ENCODE measurements at regions of chr4 and their contacts with region 1.

Region 1: GRCh38 chr4:102500696-102501446 is at the start of gene NFKB1:
- DNase-seq: peak; percentile 71 to 85 (median 78)
- H3K4me3 ChIP-seq: peak within 1 kb of the TSS; percentile 68 to 95 (median 78)
- H3K27ac ChIP-seq: peak within 1 kb of the TSS; percentile 92 to 99 (median 97)
- H3K4me1 ChIP-seq: peaks cover 23 to 44% of the 10 kb centered on the region in 2 donors
- H3K27me3 ChIP-seq: no peaks in the 10 kb centered on the region
- CTCF ChIP-seq: no peak
- POLR2A ChIP-seq: peak in 1 of 2 donors; percentile 63
- total RNA-seq, gene NFKB1: 13.6 to 49.1 (median 34.7) TPM

Region 2: DNA sequence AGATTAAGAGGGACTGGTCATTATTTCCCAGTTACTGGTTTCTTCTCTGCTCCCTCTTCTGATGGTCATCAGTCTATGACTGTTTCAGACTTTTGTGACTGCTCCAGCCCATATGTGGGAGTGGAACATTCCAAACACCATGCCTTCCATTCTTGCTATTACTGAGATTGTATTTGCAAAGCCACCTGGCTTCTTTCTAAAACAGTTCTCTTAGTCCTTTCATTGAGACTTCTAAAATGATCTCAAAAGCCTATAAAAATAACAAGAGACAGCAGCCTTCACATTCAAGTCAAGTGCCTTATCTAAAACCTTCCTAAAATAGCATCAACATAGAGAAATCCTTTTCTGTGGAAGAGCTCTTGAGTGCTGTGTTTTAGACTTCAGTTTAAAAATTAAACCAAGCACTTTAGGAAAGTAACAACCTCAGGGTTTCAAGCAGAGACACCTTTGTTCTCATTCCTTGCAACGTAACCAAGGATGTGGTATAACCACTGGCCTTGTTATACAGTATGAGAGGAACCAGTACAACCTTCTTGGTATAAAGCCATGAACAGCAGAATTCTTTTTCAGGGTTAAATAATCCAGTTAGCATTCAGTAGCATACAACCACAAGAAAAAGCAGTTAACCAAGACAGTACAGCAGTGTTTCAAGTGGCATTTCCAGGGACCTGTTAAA is 97.4 kb after region 1 on chr4:
- intact Hi-C with region 1: loop called in 1 of 2 experiments (anchors 10 kb)
- DNase-seq: no peak
- H3K4me3 ChIP-seq: no peak overlapping the region
- H3K27ac ChIP-seq: no peak overlapping the region
- H3K4me1 ChIP-seq: peaks cover 0 to 5% of the 10 kb centered on the region in 2 donors
- H3K27me3 ChIP-seq: no peaks in the 10 kb centered on the region
- CTCF ChIP-seq: no peak
- POLR2A ChIP-seq: no peak

Region 3: GRCh38 chr4:102610007-102610406 is 109.1 kb after region 1 on chr4:
- intact Hi-C with region 1: loop called in 1 of 2 experiments (anchors 10 kb)
- DNase-seq: no peak
- H3K4me3 ChIP-seq: no peak overlapping the region
- H3K27ac ChIP-seq: no peak overlapping the region
- H3K4me1 ChIP-seq: no peaks in the 10 kb centered on the region
- H3K27me3 ChIP-seq: no peaks in the 10 kb centered on the region
- CTCF ChIP-seq: peak in 1 of 6 experiments; percentile 27
- POLR2A ChIP-seq: no peak

Region 4: DNA sequence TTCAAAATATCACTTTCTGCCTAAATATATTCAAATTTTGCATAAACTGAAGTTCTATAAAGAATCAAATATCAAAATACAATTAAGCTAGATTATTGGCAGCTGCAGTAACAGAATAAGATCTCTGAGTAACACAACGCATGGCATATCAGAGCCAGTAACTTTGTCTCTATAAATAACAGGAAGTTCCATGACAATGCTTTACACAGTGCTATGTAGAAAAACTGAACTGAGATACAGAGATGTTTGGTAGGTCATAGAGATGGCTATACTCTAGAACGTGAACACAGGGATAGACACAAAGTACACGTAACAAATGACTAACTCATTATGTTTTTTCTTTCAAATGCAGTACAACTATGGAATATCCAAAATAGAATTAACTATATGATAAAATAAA is 308.3 kb after region 1 on chr4:
- intact Hi-C with region 1: no loop called
- DNase-seq: no peak
- H3K4me3 ChIP-seq: no peak overlapping the region
- H3K27ac ChIP-seq: no peak overlapping the region
- H3K4me1 ChIP-seq: peaks cover 21 to 71% of the 10 kb centered on the region in 2 donors
- H3K27me3 ChIP-seq: no peaks in the 10 kb centered on the region
- CTCF ChIP-seq: no peak
- POLR2A ChIP-seq: no peak